ENCODE measurements at regions of chr14 and their contacts with region 1.

Region 1: DNA sequence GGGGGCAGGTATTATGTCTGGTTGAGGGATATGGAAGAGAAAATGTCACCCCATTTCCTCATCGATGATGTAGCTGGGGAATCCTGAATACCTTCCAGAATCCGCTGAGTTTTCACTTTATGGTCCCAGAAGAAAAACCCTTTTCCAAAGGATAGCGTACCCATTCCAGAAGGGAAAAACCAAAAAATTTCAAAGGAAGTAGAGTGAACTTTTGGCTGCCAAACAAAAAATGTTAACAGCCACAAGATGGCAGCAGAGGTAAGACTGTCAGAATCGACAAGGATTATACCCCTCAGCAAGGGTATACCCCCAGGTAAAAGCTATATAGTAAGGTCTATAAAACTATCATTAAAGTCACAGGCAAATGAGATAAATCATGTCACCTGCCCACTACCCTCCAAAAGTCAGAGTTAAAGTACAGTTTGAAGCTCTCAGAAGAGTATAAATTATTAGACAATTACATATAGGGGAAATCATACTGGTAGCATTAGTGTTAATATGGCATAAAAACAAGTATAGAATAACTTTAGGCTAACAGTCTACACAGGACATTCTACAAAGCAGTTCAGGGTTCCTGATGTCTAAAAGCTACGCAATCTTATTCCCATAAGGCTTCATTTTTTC is 18.0 kb downstream of the ACIN1 start:
- DNase-seq: no peak
- H3K4me3 ChIP-seq: no peak overlapping the region
- H3K27ac ChIP-seq: no peak overlapping the region
- H3K4me1 ChIP-seq: peaks cover 41% of the 10 kb centered on the region
- H3K27me3 ChIP-seq: no peaks in the 10 kb centered on the region
- CTCF ChIP-seq: peak; percentile 64 to 65

Region 2: GRCh38 chr14:23095196-23096108 is 18.6 kb after region 1 on chr14 and contains the start of gene C14orf119:
- CTCF ChIA-PET with region 1: interaction called, 3 read pairs
- dilution Hi-C with region 1: no loop called
- in situ Hi-C with region 1: no loop called
- intact Hi-C with region 1: loop called (anchors 1 kb)
- DNase-seq: peak; percentile 99
- H3K4me3 ChIP-seq: peak within 1 kb of the TSS; percentile 68 to 92 (median 86)
- H3K27ac ChIP-seq: peak within 1 kb of the TSS; percentile 97
- H3K4me1 ChIP-seq: peaks cover 23% of the 10 kb centered on the region
- H3K27me3 ChIP-seq: no peaks in the 10 kb centered on the region
- CTCF ChIP-seq: no peak
- total RNA-seq, gene C14orf119: 39.2 to 57.6 TPM

Region 3: DNA sequence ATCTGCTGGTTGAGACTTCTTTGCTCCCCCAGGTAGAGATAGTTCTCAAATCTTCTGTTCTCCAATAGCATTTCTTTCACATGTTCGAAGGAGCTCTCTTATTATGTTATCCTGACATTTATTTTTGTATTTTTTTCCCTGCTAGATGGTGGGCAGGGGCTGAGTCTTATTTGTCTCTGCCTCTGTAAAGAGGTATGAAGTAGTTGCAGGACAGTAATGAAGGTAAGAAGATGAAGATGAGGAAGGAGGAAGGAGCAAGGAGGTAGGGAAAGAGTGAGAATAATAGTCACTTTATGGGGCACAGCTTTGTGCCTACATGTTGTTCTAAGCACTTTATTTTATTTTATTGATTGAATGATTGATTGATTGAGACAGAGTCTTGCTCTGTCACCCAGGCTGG is 32.9 kb after region 1 on chr14:
- CTCF ChIA-PET with region 1: interaction called, 3 read pairs
- dilution Hi-C with region 1: loop called (anchors 5 kb)
- in situ Hi-C with region 1: no loop called
- intact Hi-C with region 1: loop called (anchors 1 kb)
- DNase-seq: no peak
- H3K4me3 ChIP-seq: no peak overlapping the region
- H3K27ac ChIP-seq: no peak overlapping the region
- H3K4me1 ChIP-seq: peaks cover 9% of the 10 kb centered on the region
- H3K27me3 ChIP-seq: no peaks in the 10 kb centered on the region
- CTCF ChIP-seq: no peak

Region 4: DNA sequence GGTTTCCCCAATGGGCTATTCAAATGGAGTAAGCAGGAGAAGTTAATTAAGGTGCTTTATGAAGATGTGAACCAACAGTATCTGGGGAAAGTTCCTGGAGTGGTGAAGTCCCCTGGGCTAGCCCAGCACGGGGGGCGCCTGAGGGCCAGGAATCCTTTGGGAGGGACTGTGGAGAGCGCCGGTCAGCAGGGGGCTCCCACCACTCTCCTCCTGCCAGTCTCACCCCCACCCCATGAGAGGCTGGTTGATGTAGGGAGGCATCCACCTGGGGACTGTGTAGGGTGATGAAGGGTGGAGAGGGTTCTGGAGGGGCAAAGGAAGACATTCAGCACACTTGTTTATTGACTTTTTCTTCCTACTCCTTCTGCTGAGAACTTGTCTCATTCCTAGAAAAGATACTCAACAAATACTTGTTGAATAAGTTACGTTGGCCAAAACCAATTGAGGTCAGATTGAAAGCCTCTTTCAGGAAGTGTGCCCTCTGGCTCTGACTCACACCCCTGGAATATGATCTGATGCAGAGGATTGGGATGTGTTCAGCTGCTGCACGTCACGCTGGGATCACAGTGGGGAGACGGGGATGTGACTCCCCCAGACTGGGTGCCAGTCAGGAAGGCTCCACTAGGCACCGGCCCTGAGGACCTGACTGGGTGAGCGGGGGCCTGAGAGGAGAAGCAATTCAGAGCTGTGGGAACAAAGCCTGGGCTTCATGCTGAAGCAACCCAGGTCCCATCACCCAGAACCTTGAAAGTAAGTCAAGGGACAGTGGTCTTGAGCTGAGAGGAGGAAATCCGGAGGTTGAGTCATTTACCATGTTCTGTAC is 38.0 kb after region 1 on chr14:
- CTCF ChIA-PET with region 1: no interaction called
- dilution Hi-C with region 1: loop called (anchors 5 kb)
- in situ Hi-C with region 1: no loop called
- intact Hi-C with region 1: loop called (anchors 1 kb)
- DNase-seq: peak; percentile 96
- H3K4me3 ChIP-seq: no peak overlapping the region
- H3K27ac ChIP-seq: peak overlapping the region; percentile 86
- H3K4me1 ChIP-seq: peaks cover 23% of the 10 kb centered on the region
- H3K27me3 ChIP-seq: no peaks in the 10 kb centered on the region
- CTCF ChIP-seq: no peak

Region 5: DNA sequence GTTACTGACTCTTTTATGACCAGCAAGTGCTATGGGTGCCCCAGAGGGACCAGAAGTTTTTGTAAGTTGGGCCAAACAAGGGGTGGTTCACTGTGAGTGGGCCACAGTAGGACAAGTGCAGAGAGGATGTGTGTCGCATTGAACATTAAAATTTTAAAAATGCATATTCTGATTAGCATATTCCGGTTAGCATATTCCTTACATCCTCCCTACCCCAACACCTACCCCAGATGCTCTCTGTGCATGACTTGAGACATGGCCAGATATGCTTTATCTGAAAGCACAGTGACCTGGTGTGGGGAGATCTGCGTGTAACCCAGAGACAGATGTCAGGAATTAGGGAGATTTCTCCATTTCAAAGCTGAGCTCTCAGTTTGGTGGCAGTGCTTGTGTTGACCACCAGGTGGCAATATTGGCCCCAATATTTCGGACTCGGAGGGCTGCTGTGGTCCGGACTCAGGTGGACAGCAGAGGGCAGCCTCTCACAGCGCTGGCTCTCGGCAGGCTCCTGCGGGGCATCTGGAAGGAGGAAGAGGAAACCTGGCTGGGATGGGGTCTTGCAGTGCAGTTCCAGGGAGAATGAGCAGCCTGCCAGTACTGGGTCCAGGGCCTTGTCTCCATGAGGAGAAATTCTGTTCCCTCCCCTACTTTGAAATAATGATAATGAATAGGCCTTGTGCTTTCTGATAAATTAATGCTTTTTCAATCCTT is 43.8 kb after region 1 on chr14:
- CTCF ChIA-PET with region 1: no interaction called
- dilution Hi-C with region 1: no loop called
- in situ Hi-C with region 1: no loop called
- intact Hi-C with region 1: loop called (anchors 1 kb)
- DNase-seq: peak; percentile 63
- H3K4me3 ChIP-seq: no peak overlapping the region
- H3K27ac ChIP-seq: no peak overlapping the region
- H3K4me1 ChIP-seq: peaks cover 4% of the 10 kb centered on the region
- H3K27me3 ChIP-seq: no peaks in the 10 kb centered on the region
- CTCF ChIP-seq: peak; percentile 100

Region 6: GRCh38 chr14:23306410-23307145 is 229.7 kb after region 1 on chr14 and contains the start of gene BCL2L2:
- CTCF ChIA-PET with region 1: no interaction called
- dilution Hi-C with region 1: loop called (anchors 5 kb)
- in situ Hi-C with region 1: no loop called
- intact Hi-C with region 1: no loop called
- DNase-seq: peak; percentile 89
- H3K4me3 ChIP-seq: peak within 1 kb of the TSS; percentile 67 to 88 (median 83)
- H3K27ac ChIP-seq: peak within 1 kb of the TSS; percentile 88
- H3K4me1 ChIP-seq: peaks cover 46% of the 10 kb centered on the region
- H3K27me3 ChIP-seq: no peaks in the 10 kb centered on the region
- CTCF ChIP-seq: no peak
- total RNA-seq, gene BCL2L2: 22.0 to 63.9 TPM

Region 7: DNA sequence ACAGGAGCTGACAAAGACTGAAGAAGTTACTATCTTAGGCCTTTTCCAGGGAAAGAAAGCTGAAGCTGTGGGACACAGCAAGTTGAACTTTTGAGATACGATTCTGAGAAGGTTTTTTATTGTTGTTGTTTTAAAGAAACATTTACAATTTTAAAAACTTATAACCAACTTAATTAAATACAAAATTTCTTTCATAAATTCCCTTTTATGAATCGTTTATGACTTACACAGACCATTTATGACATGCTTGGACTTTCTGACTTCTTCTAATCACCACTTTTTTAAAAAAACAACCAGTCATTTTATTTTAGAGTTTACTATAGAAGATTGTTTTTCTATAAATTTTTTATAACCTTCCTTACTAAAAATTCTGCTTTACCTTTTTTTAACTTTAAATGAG is 628.0 kb after region 1 on chr14:
- CTCF ChIA-PET with region 1: no interaction called
- dilution Hi-C with region 1: no loop called
- in situ Hi-C with region 1: no loop called
- intact Hi-C with region 1: no loop called
- DNase-seq: no peak
- H3K4me3 ChIP-seq: no peak overlapping the region
- H3K27ac ChIP-seq: no peak overlapping the region
- H3K4me1 ChIP-seq: no peaks in the 10 kb centered on the region
- H3K27me3 ChIP-seq: no peaks in the 10 kb centered on the region
- CTCF ChIP-seq: no peak

Measured in mammary epithelial cell (primary cell).